HEK293T (cell line): ENCODE measurements at regions of chr19 and their contacts with region 1.

Region 1: DNA sequence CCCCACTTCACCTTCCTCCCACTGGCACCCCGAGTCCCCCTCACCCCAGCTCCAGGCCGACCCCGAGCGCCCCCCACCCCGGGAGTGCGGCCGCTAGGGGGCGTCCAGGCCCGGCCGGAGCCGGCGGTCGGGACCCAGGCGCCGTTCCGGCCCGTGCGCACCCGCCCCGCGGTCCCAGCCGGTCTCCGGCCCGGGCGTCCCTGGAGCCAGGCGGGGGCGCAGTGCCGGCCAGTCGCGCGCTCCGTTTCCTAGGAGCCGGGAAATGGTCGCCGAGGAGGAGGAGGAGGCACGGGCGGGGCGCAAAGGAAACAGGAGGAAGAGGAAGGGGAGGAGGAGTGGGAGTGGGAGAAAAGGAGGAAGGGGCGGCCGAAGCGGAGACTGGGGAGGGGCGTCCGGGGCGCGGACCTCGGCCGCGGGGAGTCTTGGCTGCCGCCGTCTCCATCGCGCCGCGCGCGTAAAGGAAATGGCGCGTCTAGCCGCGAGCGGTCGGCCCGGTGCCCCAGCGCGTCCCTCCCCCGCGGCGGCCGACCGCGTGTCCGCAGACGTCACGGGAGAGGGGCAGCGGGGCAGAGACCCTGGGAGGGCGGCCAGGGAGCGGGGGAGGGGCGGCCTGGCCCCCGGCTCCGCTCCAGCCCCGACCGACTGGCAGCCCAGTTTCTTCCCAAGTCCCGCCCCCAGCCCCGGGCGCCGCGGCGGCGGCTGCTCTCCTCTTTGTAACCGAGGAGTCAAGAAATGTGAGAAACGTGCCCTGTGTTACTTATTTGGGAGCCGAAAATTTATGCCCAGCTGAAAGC is 1.1 kb upstream of the KCTD15 start:
- DNase-seq: peak; percentile 84

Region 2: GRCh38 chr19:33767898-33768413 is 27.6 kb before region 1 on chr19:
- CTCF ChIA-PET with region 1: no interaction called
- POLR2A ChIA-PET with region 1: no interaction called
- DNase-seq: peak; percentile 49

Region 3: DNA sequence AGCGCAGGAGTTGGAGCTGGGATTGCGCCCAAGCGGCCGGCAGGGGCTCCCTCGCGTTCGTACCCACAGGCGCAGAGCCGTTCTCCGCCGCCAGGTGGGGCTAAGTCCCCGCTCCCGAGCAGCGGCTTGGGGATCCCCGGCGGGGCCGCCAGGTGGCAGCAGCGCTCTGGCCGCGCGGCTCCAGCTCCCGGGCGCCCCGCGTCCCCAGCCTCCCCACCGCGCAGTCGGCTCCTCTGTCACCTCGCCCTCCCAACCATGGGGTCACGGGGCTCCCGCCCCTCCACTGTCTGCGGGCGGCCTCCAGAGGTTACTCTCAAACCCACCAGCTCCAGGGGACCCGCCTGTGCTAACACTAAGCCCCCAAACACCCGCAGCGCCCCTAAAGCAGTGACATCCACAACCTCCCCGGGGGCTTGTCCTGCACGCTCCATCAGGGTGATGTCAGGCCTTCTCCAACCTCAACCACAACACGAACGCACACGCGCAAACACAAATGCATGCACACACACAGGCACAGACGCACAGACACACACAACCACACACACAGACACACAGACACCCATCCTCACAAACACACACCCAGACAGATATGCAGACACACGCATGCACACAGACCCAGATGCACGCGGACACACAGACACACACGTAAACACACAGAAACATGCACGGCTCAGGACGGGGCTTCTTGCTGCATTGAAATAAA is 17.3 kb before region 1 on chr19:
- CTCF ChIA-PET with region 1: interaction called, 7 read pairs
- POLR2A ChIA-PET with region 1: interaction called, 10 read pairs
- DNase-seq: peak; percentile 96

Region 4: GRCh38 chr19:33841685-33842084 is 46.1 kb after region 1 on chr19:
- CTCF ChIA-PET with region 1: no interaction called
- POLR2A ChIA-PET with region 1: no interaction called
- DNase-seq: no peak